ENCODE measurements at regions of chr19 and their contacts with region 1.

Region 1: DNA sequence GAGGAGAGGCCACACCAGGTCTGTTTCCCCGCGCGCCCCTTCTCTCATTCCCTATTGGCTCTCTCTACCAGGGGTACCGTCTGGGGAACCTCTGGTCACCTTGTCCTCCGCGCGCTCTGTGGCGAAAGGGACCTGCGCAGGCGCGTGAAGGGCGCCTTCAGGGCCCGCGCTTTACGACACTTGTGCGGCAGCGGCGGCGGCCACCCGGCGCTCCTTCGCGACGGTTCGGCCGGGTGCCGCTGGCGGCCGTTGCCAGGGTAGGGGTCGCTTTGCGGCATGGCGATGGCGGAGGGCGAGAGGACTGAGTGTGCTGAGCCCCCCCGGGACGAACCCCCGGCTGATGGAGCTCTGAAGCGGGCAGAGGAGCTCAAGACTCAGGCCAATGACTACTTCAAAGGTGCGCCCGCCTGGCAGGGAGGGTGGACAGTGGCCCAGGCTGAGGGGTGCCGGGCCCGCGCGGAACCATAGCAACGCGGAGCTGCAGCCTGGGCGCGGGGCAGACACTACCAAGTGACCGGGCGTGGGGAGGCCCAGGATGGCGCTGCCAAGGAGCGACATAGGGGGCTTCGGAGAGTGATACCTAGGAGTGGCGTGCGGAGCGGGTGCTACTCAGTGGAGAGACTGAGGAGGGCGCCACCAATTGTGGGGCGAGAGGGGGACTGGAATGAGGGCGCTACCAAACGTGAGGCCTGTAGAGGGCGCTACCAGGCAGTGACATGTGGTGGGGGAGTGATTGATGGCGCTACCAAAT is at the start of gene PPP5C:
- DNase-seq: peak; percentile 97
- H3K4me3 ChIP-seq: peak within 1 kb of the TSS; percentile 88 to 98
- H3K27ac ChIP-seq: peak within 1 kb of the TSS; percentile 67 to 88
- H3K4me1 ChIP-seq: peaks cover 21 to 34% of the 10 kb centered on the region in 2 experiments
- H3K27me3 ChIP-seq: peaks cover 4% of the 10 kb centered on the region; the same call in 1 of the 2 replicates
- CTCF ChIP-seq: peak; percentile 97
- EP300 ChIP-seq: no peak; a peak in 1 of 4 replicates
- RAD21 ChIP-seq: peak; percentile 52
- polyA plus RNA-seq, gene PPP5C: 131 and 162 TPM in 2 replicates

Region 2: GRCh38 chr19:46232029-46232428 is 115.0 kb before region 1 on chr19:
- CTCF ChIA-PET with region 1: no interaction called
- POLR2A ChIA-PET with region 1: no interaction called
- DNase-seq: no peak
- H3K4me3 ChIP-seq: no peak overlapping the region
- H3K27ac ChIP-seq: no peak overlapping the region
- H3K4me1 ChIP-seq: no peaks in the 10 kb centered on the region
- H3K27me3 ChIP-seq: peaks cover 87% of the 10 kb centered on the region
- CTCF ChIP-seq: no peak
- EP300 ChIP-seq: no peak
- RAD21 ChIP-seq: no peak

Region 3: GRCh38 chr19:46299004-46299509 is 47.9 kb before region 1 on chr19:
- CTCF ChIA-PET with region 1: interaction called, 26 read pairs
- POLR2A ChIA-PET with region 1: no interaction called
- DNase-seq: peak; percentile 99
- H3K4me3 ChIP-seq: no peak overlapping the region
- H3K27ac ChIP-seq: peak overlapping the region in 1 of 2 experiments; percentile 29; a peak in 1 of 4 replicates
- H3K4me1 ChIP-seq: peaks cover 15 to 34% of the 10 kb centered on the region in 2 experiments
- H3K27me3 ChIP-seq: no peaks in the 10 kb centered on the region
- CTCF ChIP-seq: no peak
- EP300 ChIP-seq: peak; percentile 50 to 52; a peak in 2 of 4 replicates
- RAD21 ChIP-seq: no peak

Region 4: GRCh38 chr19:46373421-46374359 is 26.7 kb after region 1 on chr19:
- CTCF ChIA-PET with region 1: interaction called, 21 read pairs
- POLR2A ChIA-PET with region 1: no interaction called
- DNase-seq: peak; percentile 80
- H3K4me3 ChIP-seq: no peak overlapping the region
- H3K27ac ChIP-seq: peak overlapping the region; percentile 63 to 67
- H3K4me1 ChIP-seq: peaks cover 30 to 46% of the 10 kb centered on the region in 2 experiments
- H3K27me3 ChIP-seq: no peaks in the 10 kb centered on the region
- CTCF ChIP-seq: no peak
- EP300 ChIP-seq: peak in 1 of 2 experiments; percentile 39; a peak in 1 of 4 replicates
- RAD21 ChIP-seq: no peak